ENCODE measurements at regions of chr5 and their contacts with region 1.

Region 1: DNA sequence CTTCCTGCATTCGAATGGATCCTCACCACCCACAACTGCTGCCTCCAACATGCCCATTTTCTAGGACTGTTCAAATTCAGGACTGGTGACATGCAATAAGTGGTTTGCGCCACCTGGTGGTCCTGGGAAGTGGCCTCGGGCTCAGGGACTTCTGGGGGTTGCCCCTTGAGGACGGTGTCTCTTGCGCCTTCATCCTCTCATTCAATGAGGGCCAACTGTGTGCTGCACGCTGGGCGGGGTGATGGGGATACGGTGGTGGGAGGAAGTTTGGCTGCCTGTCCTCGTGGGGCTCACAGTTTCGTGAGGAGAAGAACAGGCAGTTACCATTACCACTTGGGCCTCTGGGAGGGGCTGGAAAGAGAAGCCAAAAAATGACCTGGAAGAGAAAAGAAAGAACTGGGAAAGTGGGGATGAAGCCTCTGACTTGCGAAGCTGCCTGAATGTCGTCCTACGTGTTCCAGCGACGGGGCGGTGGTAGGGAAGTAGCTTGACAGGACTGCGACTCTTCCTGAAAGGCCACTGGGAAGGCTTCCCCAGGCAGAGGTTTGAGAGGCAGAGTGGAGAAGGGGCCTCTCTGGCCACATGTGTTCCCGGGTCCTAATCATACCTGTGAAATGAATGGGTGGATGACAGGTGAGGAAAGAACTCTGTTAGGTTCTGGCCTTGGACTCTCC is 49.0 kb downstream of the PSD2 start:
- DNase-seq: peak; percentile 65 to 96 (median 86)

Region 2: GRCh38 chr5:139808493-139809139 is 36.0 kb before region 1 on chr5:
- intact Hi-C with region 1: loop called (anchors 5 kb)
- DNase-seq: peak in 2 of 10 donors; percentile 73 to 85